Esophagus muscularis mucosa (tissue), 4 donors: ENCODE measurements at regions of chr3 and their contacts with region 1.

Region 1: DNA sequence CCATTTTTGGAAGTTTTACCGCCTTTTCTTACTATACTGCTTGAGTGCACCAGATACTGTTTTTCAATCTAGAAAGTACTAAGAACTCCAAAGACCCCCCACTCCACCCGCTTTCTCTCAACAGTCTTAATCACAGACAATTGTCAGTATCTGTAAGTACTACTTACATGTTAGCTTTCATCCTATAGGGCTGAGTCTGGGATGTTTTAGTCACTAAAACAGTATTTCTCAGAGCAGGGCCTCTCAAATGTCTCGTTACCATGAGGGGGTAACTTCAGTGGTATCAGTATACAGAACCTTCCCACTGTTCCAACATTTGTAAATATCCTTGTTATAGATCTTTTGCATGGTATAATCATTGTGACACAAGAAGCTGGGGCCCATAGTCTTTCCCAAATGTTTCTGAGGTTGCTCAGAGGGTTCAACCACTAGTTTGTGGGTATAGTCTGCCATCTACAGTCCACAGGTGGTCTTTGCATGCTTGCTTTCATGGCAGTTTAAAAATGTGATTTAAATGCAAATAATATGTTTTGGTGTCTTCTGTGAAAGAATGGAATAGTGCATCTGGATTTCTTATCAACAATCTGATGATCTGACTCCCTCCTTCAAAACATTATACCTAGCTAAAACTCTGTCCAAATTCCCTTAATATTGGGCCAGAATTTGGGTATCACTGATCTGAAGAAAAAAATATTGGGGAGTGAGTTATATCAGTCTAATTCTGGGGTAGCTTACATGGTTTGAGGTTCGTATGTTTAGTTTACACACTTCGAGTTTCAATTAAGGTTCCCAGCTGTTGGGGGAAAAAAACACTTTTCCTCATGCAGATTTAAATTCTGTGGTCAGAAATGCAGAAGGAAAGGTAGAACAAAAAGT is 18.0 kb upstream of the DNAJC13 start:
- DNase-seq: no peak
- H3K4me3 ChIP-seq: no peak overlapping the region
- H3K27ac ChIP-seq: no peak overlapping the region
- H3K4me1 ChIP-seq: no peaks in the 10 kb centered on the region
- H3K27me3 ChIP-seq: no peaks in the 10 kb centered on the region
- CTCF ChIP-seq: peak; percentile 51 to 67 (median 65)
- EP300 ChIP-seq: no peak
- POLR2A ChIP-seq: no peak

Region 2: DNA sequence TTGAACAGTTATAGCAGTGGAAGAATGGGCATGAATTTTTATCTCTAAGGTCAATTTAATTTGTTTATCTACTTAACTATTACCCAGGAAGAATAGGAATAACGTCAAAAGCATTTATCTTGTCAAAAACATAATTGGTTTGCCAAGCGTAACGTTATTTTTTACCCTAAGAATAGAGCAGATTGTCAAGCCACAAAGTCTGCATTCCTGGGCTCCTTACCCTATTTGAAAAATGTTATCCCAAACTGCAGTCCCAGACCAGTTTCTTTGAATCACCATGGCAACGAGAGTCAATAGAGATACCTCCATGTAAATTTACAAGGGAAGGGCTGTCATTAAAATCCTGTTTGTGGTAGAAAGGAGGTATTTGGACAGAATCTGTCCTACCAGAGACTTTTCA is 425.6 kb before region 1 on chr3:
- intact Hi-C with region 1: no loop called
- DNase-seq: no peak
- H3K4me3 ChIP-seq: no peak overlapping the region
- H3K27ac ChIP-seq: no peak overlapping the region
- H3K4me1 ChIP-seq: no peaks in the 10 kb centered on the region
- H3K27me3 ChIP-seq: no peaks in the 10 kb centered on the region
- CTCF ChIP-seq: no peak
- EP300 ChIP-seq: no peak
- POLR2A ChIP-seq: no peak

Region 3: DNA sequence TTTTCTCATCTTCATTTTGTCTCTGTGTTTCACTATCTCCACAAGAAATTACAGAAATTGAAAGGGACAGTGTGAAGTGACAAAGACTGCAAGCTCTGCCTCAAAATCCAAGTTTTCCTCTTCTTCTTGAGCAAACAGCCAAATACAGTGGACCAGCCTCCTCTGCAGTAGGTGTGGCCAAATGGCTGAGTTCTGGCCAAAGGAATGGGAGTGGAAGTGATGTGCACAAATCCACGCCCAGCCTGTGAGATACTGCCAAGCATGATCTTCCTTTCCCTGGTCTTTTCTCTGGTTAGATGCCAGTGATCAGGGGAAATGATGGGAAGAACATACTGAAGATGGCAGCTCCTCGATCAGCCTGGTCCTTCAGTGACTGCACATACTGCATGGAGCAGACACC is 253.5 kb before region 1 on chr3:
- intact Hi-C with region 1: no loop called
- DNase-seq: no peak
- H3K4me3 ChIP-seq: no peak overlapping the region
- H3K27ac ChIP-seq: no peak overlapping the region
- H3K4me1 ChIP-seq: no peaks in the 10 kb centered on the region
- H3K27me3 ChIP-seq: no peaks in the 10 kb centered on the region
- CTCF ChIP-seq: no peak
- EP300 ChIP-seq: no peak
- POLR2A ChIP-seq: no peak

Region 4: GRCh38 chr3:132253262-132253878 is 145.9 kb before region 1 on chr3:
- intact Hi-C with region 1: loop called (anchors 10 kb)
- DNase-seq: no peak
- H3K4me3 ChIP-seq: no peak overlapping the region
- H3K27ac ChIP-seq: no peak overlapping the region
- H3K4me1 ChIP-seq: no peaks in the 10 kb centered on the region
- H3K27me3 ChIP-seq: no peaks in the 10 kb centered on the region
- CTCF ChIP-seq: peak; percentile 50 to 67 (median 56)
- EP300 ChIP-seq: no peak
- POLR2A ChIP-seq: no peak

Region 5: DNA sequence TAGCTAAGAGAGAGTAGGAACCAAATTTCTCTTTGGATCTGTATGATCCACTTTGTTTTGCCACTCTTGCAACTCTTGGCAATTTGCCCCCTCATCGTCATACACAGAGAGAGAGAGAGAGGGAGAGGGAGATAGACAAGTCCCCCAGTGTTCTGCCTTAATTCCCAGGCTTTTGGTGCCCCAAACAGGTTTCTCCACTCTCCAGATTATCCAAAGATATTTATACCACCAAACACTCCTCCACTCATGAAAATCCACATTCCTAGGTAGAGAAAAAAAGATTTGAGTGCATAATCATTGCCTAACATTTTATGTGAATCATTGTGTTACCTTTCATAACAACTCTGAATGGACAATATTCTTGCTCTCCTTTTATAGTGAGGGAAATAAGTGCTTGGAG is 66.8 kb before region 1 on chr3:
- intact Hi-C with region 1: no loop called
- DNase-seq: no peak
- H3K4me3 ChIP-seq: no peak overlapping the region
- H3K27ac ChIP-seq: no peak overlapping the region
- H3K4me1 ChIP-seq: no peaks in the 10 kb centered on the region
- H3K27me3 ChIP-seq: no peaks in the 10 kb centered on the region
- CTCF ChIP-seq: no peak
- EP300 ChIP-seq: no peak
- POLR2A ChIP-seq: no peak

Region 6: DNA sequence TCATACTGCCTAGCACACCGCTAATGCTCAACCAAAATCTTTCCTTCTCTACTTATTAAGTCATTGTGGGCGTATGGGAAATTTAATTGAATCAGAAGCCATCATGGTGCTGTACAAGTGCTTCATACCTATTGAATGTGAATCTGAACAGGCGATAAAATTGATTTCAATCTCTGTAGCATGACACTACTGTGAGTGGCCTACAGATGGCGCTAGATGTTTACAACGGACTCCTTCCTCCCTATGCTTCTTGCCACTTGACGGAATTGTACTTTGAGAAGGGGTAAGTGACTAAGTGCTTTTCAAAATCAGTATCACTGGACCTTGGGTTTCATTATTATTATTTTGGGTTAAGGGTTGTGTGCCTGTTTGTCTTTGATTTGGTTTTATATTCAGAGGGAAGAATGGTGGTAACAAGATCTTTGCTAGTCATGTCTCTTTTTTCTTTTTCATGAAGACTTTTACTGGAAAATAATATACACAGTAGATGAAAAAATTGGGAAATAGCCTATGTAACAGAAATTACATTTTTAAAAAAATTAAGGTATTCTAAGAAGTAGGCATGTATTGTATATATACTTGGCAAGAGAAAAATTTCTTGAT is 46.6 kb before region 1 on chr3:
- intact Hi-C with region 1: loop called (anchors 5 kb)
- DNase-seq: no peak
- H3K4me3 ChIP-seq: no peak overlapping the region
- H3K27ac ChIP-seq: no peak overlapping the region
- H3K4me1 ChIP-seq: peaks cover 0 to 5% (median 0%) of the 10 kb centered on the region in 4 donors
- H3K27me3 ChIP-seq: no peaks in the 10 kb centered on the region
- CTCF ChIP-seq: peak; percentile 89 to 91 (median 90)
- EP300 ChIP-seq: no peak
- POLR2A ChIP-seq: no peak